CD4-positive, alpha-beta memory T cell (primary cell): ENCODE measurements at regions of chr20 and their contacts with region 1.

Region 1: GRCh38 chr20:50120897-50121693 is 8.1 kb upstream of the UBE2V1 start:
- DNase-seq: peak; percentile 59 to 69 (median 67)
- H3K4me3 ChIP-seq: no peak overlapping the region
- H3K4me3 Mint-ChIP-seq: no peak overlapping the region
- H3K27ac ChIP-seq: no peak overlapping the region
- H3K27ac Mint-ChIP-seq: peak overlapping the region in 1 of 7 donors; percentile 68
- H3K4me1 ChIP-seq: peaks cover 4% of the 10 kb centered on the region
- H3K4me1 Mint-ChIP-seq: peaks cover under 1 to 8% (median 7%) of the 10 kb centered on the region in 4 donors
- H3K27me3 ChIP-seq: no peaks in the 10 kb centered on the region
- H3K27me3 Mint-ChIP-seq: no peaks in the 10 kb centered on the region

Region 2: DNA sequence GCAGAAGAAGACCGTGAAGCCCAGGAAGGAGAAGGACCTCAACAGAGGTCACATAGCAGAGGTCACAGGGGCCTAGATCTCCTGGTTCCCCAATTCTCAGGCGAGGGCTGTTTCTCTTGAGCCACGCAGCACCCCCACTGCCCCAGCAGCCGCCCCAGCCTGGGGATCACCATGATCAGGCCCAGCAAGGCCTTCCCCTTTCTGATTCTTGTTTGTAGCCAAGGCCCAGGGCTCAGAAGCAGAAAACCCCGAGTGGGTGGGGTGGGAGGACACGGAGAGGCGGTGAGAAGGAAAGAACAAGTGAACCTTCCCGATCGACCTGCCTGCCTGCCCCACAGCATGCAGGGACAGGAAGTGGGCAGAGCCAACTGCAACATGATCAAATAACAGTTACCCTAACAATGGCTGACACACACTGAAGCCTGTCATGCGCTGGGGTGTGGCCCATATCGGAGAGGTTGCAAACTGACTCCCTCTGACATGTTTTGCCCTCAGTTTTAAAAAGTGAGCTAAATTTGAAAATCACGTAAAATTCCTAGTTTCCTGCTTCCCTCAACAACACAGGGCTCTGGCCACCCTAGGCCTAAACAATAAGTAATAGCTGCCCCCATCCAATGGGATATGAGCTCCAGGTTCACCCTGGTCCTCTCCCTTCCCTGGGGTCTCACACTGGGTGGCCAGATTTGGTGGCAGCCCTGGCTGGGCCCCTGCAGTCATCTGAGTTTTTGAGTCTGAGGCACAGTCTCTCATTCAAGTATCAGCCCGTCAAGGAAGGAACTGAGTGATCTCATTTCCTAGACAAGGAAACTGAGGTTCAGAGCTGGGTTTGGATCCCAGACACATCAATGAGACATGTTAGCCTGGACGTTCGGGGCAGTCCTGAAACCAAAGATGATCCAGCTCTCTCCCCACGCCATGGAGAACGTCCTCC is 25.9 kb after region 1 on chr20:
- CTCF ChIA-PET with region 1: interaction called, 70 read pairs
- POLR2A ChIA-PET with region 1: interaction called, 76 read pairs
- intact Hi-C with region 1: no loop called
- DNase-seq: peak; percentile 78 to 94 (median 84)
- H3K4me3 ChIP-seq: peak overlapping the region; percentile 4 to 49
- H3K4me3 Mint-ChIP-seq: peak overlapping the region; percentile 78 to 93 (median 84)
- H3K27ac ChIP-seq: peak overlapping the region; percentile 78
- H3K27ac Mint-ChIP-seq: peak overlapping the region; percentile 97 to 99 (median 98)
- H3K4me1 ChIP-seq: peaks cover 65% of the 10 kb centered on the region
- H3K4me1 Mint-ChIP-seq: peaks cover 48 to 70% (median 60%) of the 10 kb centered on the region in 4 donors
- H3K27me3 ChIP-seq: no peaks in the 10 kb centered on the region
- H3K27me3 Mint-ChIP-seq: no peaks in the 10 kb centered on the region

Region 3: GRCh38 chr20:50179507-50180016 is 58.5 kb after region 1 on chr20:
- CTCF ChIA-PET with region 1: interaction called, 152 read pairs
- POLR2A ChIA-PET with region 1: interaction called, 5 read pairs
- intact Hi-C with region 1: loop called (anchors 2 kb)
- DNase-seq: peak in 1 of 5 donors; percentile 4
- H3K4me3 ChIP-seq: no peak overlapping the region
- H3K4me3 Mint-ChIP-seq: no peak overlapping the region
- H3K27ac ChIP-seq: no peak overlapping the region
- H3K27ac Mint-ChIP-seq: peak overlapping the region in 1 of 7 donors; percentile 53
- H3K4me1 ChIP-seq: no peaks in the 10 kb centered on the region
- H3K4me1 Mint-ChIP-seq: peaks cover 0 to 7% (median 0%) of the 10 kb centered on the region in 4 donors
- H3K27me3 ChIP-seq: no peaks in the 10 kb centered on the region
- H3K27me3 Mint-ChIP-seq: peaks cover 2 to 4% of the 10 kb centered on the region in 2 donors

Region 4: DNA sequence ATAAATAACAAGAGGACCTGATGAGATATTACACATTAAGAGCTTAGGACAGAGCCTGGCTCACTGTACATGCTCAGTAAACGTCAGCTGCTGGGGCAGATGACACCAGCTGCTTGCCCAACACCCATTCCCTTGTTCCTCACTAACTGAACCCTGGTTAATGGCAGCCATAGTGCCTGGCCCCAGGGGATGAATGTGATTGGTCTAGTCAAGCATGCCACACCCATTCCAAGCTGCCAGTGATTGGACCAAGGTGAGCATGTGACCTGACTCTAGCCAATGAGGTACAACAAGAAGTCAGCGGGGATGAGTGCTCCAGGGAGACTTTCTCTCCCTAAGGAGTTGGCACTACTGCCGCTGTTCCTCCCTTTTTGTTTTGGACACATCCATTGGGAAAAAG is 304.0 kb after region 1 on chr20:
- CTCF ChIA-PET with region 1: no interaction called
- POLR2A ChIA-PET with region 1: no interaction called
- intact Hi-C with region 1: no loop called
- DNase-seq: no peak
- H3K4me3 ChIP-seq: no peak overlapping the region
- H3K4me3 Mint-ChIP-seq: no peak overlapping the region
- H3K27ac ChIP-seq: no peak overlapping the region
- H3K27ac Mint-ChIP-seq: no peak overlapping the region
- H3K4me1 ChIP-seq: no peaks in the 10 kb centered on the region
- H3K4me1 Mint-ChIP-seq: no peaks in the 10 kb centered on the region
- H3K27me3 ChIP-seq: no peaks in the 10 kb centered on the region
- H3K27me3 Mint-ChIP-seq: peaks cover 3 to 6% of the 10 kb centered on the region in 2 donors